Activated B cell treated with CpG ODN at 0.5 μM for 24 hours (primary cell): ENCODE measurements at regions of chr11 and their contacts with region 1.

Region 1: GRCh38 chr11:85694386-85694980 is 8.5 kb upstream of the CCDC89 start:
- DNase-seq: no peak
- ATAC-seq: no peak
- H3K4me3 Mint-ChIP-seq: no peak overlapping the region
- H3K27ac Mint-ChIP-seq: no peak overlapping the region
- H3K4me1 Mint-ChIP-seq: peaks cover 1% of the 10 kb centered on the region
- H3K27me3 Mint-ChIP-seq: peaks cover 3% of the 10 kb centered on the region
- CTCF ChIP-seq: no peak

Region 2: DNA sequence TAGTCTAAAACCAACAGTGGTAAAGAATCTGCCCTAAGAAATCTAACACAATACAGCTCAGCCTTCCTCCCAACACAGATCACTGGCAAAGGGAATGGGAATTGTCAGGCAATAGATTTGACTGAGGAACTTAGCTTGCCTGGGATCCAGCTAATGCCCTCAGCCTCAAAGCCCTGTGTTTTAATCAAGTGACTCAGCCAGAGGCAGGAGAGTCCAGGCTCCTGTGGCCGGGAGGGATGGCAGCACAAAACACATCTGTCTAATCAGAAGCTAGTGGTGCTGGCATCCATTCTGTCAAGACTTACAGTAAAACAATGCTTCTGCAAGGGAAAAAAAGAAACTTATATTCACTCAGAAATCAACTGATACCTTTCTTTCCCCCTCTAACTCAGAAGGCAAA is 110.9 kb after region 1 on chr11:
- CTCF ChIA-PET with region 1: no interaction called
- POLR2A ChIA-PET with region 1: no interaction called
- intact Hi-C with region 1: no loop called
- DNase-seq: no peak
- ATAC-seq: no peak
- H3K4me3 Mint-ChIP-seq: no peak overlapping the region
- H3K27ac Mint-ChIP-seq: no peak overlapping the region
- H3K4me1 Mint-ChIP-seq: peaks cover 14% of the 10 kb centered on the region
- H3K27me3 Mint-ChIP-seq: peaks cover 5% of the 10 kb centered on the region
- CTCF ChIP-seq: no peak

Region 3: DNA sequence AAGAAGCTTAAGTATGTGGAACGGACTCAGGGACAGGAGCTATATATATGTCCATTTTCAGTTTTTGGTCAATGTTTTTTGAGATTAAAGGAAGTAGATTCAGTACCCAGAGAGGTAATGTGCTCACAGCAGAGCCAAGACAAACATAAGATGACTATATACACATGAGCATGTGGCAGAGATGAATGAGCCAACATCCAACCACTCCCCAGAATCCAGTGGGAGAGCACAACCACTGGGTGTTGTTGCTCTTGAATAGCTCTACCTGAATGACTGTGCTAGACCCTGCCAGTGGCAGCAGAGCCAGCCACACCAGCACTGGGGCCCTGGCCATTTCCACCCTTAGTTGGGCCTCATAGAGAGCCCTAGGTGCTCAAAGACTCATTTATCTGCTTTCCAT is 127.2 kb after region 1 on chr11:
- CTCF ChIA-PET with region 1: no interaction called
- POLR2A ChIA-PET with region 1: no interaction called
- intact Hi-C with region 1: no loop called
- DNase-seq: no peak
- ATAC-seq: no peak
- H3K4me3 Mint-ChIP-seq: no peak overlapping the region
- H3K27ac Mint-ChIP-seq: no peak overlapping the region
- H3K4me1 Mint-ChIP-seq: no peaks in the 10 kb centered on the region
- H3K27me3 Mint-ChIP-seq: no peaks in the 10 kb centered on the region
- CTCF ChIP-seq: no peak

Region 4: DNA sequence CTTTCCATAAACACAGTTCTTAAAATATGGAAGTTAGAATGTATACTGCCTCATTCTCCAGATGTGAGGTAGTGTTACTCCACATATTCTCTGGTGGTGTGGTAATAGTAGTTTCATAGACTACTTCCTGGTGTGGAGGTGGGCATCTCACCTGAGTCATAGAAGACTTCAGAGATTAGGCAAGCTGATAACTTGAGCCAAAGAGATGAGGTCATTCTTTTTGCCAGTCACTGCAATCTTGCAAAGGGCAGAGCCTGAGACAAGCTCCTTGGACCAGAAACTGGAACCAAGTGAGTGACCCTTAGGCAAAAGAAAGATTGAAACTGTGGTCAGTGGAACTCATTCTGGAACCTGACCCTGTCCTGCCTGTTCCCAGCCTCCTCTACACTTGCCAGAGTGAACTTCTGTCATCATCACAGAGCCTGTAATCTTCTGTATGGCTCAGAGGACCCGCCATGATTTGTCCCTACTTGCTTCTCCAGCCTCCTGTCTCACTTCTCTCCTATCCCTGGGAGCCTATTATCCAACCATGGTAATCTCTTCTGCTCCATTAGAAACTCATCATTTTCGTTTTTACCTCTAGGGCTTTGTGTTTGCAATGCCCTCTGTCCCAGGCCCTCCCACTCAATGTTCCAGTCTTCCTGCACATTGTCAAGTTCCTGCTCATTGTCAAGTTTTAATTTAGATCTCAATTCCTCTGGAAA is 150.1 kb after region 1 on chr11:
- CTCF ChIA-PET with region 1: no interaction called
- POLR2A ChIA-PET with region 1: no interaction called
- intact Hi-C with region 1: no loop called
- DNase-seq: no peak
- ATAC-seq: no peak
- H3K4me3 Mint-ChIP-seq: no peak overlapping the region
- H3K27ac Mint-ChIP-seq: no peak overlapping the region
- H3K4me1 Mint-ChIP-seq: no peaks in the 10 kb centered on the region
- H3K27me3 Mint-ChIP-seq: no peaks in the 10 kb centered on the region
- CTCF ChIP-seq: no peak

Region 5: GRCh38 chr11:86081455-86081854 is 387.0 kb after region 1 on chr11:
- CTCF ChIA-PET with region 1: no interaction called
- POLR2A ChIA-PET with region 1: no interaction called
- intact Hi-C with region 1: no loop called
- DNase-seq: no peak
- ATAC-seq: no peak
- H3K4me3 Mint-ChIP-seq: no peak overlapping the region
- H3K27ac Mint-ChIP-seq: no peak overlapping the region
- H3K4me1 Mint-ChIP-seq: no peaks in the 10 kb centered on the region
- H3K27me3 Mint-ChIP-seq: no peaks in the 10 kb centered on the region
- CTCF ChIP-seq: no peak

Region 6: GRCh38 chr11:86818466-86819192 is 1124.1 kb after region 1 on chr11:
- CTCF ChIA-PET with region 1: no interaction called
- POLR2A ChIA-PET with region 1: no interaction called
- intact Hi-C with region 1: loop called (anchors 10 kb)
- DNase-seq: no peak
- ATAC-seq: no peak
- H3K4me3 Mint-ChIP-seq: no peak overlapping the region
- H3K27ac Mint-ChIP-seq: no peak overlapping the region
- H3K4me1 Mint-ChIP-seq: no peaks in the 10 kb centered on the region
- H3K27me3 Mint-ChIP-seq: peaks cover 12% of the 10 kb centered on the region
- CTCF ChIP-seq: no peak